ENCODE measurements at regions of chr2 and their contacts with region 1.

Region 1: DNA sequence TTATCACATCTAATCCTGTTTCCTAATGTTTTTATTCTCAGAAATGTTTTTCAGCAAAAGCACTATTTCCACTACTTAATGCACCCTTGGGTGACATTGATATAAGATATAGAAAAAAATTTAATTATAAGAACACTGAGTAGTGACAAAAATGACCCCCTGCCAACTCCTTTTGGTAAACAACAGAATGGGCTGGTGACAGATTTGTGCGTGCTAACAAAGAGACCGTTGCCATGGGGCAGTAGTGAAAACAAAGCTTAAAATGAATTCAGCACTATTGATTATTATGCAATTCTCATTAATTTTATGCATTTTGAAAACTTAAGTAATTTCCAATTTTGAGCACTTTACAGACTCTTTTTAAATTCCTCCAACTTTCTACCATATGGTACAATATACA is 33.1 kb downstream of the RDH14 start:
- DNase-seq: no peak
- H3K4me3 ChIP-seq: no peak overlapping the region
- H3K27ac ChIP-seq: no peak overlapping the region
- H3K4me1 ChIP-seq: no peaks in the 10 kb centered on the region
- H3K27me3 ChIP-seq: no peaks in the 10 kb centered on the region
- CTCF ChIP-seq: no peak
- POLR2A ChIP-seq: no peak

Region 2: GRCh38 chr2:17879913-17880274 is 647.4 kb before region 1 on chr2:
- intact Hi-C with region 1: loop called (anchors 5 kb)
- DNase-seq: no peak
- H3K4me3 ChIP-seq: peak overlapping the region; percentile 67 to 95 (median 79)
- H3K27ac ChIP-seq: peak overlapping the region; percentile 66 to 87
- H3K4me1 ChIP-seq: no peaks in the 10 kb centered on the region
- H3K27me3 ChIP-seq: no peaks in the 10 kb centered on the region
- CTCF ChIP-seq: no peak
- POLR2A ChIP-seq: no peak

Region 3: GRCh38 chr2:17962876-17963275 is 564.5 kb before region 1 on chr2:
- intact Hi-C with region 1: no loop called
- DNase-seq: no peak
- H3K4me3 ChIP-seq: no peak overlapping the region
- H3K27ac ChIP-seq: no peak overlapping the region
- H3K4me1 ChIP-seq: no peaks in the 10 kb centered on the region
- H3K27me3 ChIP-seq: no peaks in the 10 kb centered on the region
- CTCF ChIP-seq: no peak
- POLR2A ChIP-seq: no peak

Region 4: GRCh38 chr2:18510775-18511174 is 16.6 kb before region 1 on chr2:
- intact Hi-C with region 1: loop called (anchors 2 kb)
- DNase-seq: no peak
- H3K4me3 ChIP-seq: no peak overlapping the region
- H3K27ac ChIP-seq: no peak overlapping the region
- H3K4me1 ChIP-seq: no peaks in the 10 kb centered on the region
- H3K27me3 ChIP-seq: no peaks in the 10 kb centered on the region
- CTCF ChIP-seq: no peak
- POLR2A ChIP-seq: no peak